SK-N-SH (cell line): ENCODE measurements at regions of chr1 and their contacts with region 1.

Region 1: DNA sequence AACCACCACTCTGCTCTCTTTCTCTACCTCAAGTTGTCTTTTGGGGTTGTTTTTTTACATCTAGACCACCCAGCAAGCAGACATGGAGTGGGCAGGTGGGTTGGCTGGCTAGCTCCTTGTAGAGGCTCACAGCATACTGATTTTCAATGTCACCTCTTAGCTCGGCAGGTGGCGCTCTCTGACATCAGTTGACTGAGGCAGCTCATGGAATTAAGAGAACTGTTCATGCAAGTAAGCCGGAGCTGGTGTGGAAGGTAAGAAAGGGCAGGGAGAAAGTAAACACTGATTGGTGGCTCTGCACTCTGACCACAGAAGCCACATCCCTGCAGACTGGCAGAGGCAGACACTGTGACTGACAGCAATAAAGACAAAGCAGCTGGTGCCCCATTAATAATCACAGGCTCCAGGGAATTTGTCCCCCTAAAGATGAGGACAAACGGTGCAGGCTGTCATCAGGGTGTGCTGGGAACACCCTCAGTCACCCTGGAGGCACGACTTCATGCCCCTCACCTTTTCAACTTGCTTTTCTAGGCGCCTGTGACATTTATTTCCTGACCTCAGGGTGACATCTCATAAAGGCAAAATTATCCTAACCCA is 226.8 kb downstream of the LMX1A start:
- DNase-seq: peak; percentile 41
- H3K4me3 ChIP-seq: peak overlapping the region in 1 of 2 experiments; percentile 36; a peak in 1 of 4 replicates
- H3K27ac ChIP-seq: no peak overlapping the region
- H3K4me1 ChIP-seq: no peaks in the 10 kb centered on the region
- H3K27me3 ChIP-seq: no peaks in the 10 kb centered on the region
- CTCF ChIP-seq: peak; percentile 60
- EP300 ChIP-seq: no peak
- RAD21 ChIP-seq: peak; percentile 47

Region 2: DNA sequence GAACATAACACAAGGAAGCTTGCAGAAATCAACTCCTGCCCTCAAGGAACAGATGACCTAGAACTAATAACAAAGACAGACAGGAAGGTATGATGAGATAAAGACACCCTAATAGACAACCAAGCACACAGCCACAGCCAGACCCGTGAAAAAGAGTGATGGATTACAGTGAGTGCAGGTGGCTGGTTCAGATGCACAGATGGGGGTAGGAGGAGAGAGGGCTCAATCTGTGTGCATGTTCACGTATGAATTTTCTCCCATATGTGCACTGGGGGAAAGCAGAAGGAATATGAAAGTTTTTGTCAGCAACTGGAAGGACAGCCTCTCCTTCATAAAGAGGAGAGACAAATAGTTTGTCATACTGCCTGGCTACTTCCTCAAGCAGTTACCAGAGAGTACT is 203.6 kb before region 1 on chr1:
- CTCF ChIA-PET with region 1: no interaction called
- POLR2A ChIA-PET with region 1: no interaction called
- DNase-seq: no peak
- H3K4me3 ChIP-seq: no peak overlapping the region
- H3K27ac ChIP-seq: no peak overlapping the region
- H3K4me1 ChIP-seq: peaks cover 0 to 6% of the 10 kb centered on the region in 2 experiments; a peak in 1 of 4 replicates
- H3K27me3 ChIP-seq: no peaks in the 10 kb centered on the region
- CTCF ChIP-seq: no peak
- EP300 ChIP-seq: no peak
- RAD21 ChIP-seq: no peak

Region 3: GRCh38 chr1:165116732-165117131 is 12.9 kb before region 1 on chr1:
- CTCF ChIA-PET with region 1: interaction called, 14 read pairs
- POLR2A ChIA-PET with region 1: no interaction called
- DNase-seq: no peak
- H3K4me3 ChIP-seq: no peak overlapping the region
- H3K27ac ChIP-seq: no peak overlapping the region
- H3K4me1 ChIP-seq: 0 out of 4 replicates have a peak, but pooled peaks cover 0 to 5% of the 10 kb centered on the region in 2 experiments
- H3K27me3 ChIP-seq: peaks cover 8% of the 10 kb centered on the region; the same call in 1 of the 2 replicates
- CTCF ChIP-seq: no peak
- EP300 ChIP-seq: 0 out of 4 replicates have a peak, but pooled peaks of 1 of the 2 experiments have one; percentile 8
- RAD21 ChIP-seq: no peak

Region 4: GRCh38 chr1:165144757-165145397 is 15.2 kb after region 1 on chr1:
- CTCF ChIA-PET with region 1: interaction called, 16 read pairs
- POLR2A ChIA-PET with region 1: no interaction called
- DNase-seq: peak; percentile 38
- H3K4me3 ChIP-seq: no peak overlapping the region; a peak in 1 of 4 replicates
- H3K27ac ChIP-seq: no peak overlapping the region
- H3K4me1 ChIP-seq: no peaks in the 10 kb centered on the region
- H3K27me3 ChIP-seq: no peaks in the 10 kb centered on the region
- CTCF ChIP-seq: peak; percentile 82
- EP300 ChIP-seq: no peak
- RAD21 ChIP-seq: peak; percentile 62

Region 5: GRCh38 chr1:165276314-165276713 is 146.6 kb after region 1 on chr1:
- CTCF ChIA-PET with region 1: no interaction called
- POLR2A ChIA-PET with region 1: no interaction called
- DNase-seq: no peak
- H3K4me3 ChIP-seq: no peak overlapping the region
- H3K27ac ChIP-seq: no peak overlapping the region
- H3K4me1 ChIP-seq: no peaks in the 10 kb centered on the region
- H3K27me3 ChIP-seq: no peaks in the 10 kb centered on the region; the same call in 1 of the 2 replicates
- CTCF ChIP-seq: no peak
- EP300 ChIP-seq: no peak
- RAD21 ChIP-seq: no peak